ENCODE measurements at regions of chr18 and their contacts with region 1.

Region 1: GRCh38 chr18:58314284-58314683 is 270.3 kb downstream of the NEDD4L start:
- DNase-seq: peak; percentile 95
- H3K4me3 Mint-ChIP-seq: no peak overlapping the region
- H3K27ac Mint-ChIP-seq: peak overlapping the region; percentile 83
- H3K4me1 Mint-ChIP-seq: peaks cover 49% of the 10 kb centered on the region
- H3K27me3 Mint-ChIP-seq: no peaks in the 10 kb centered on the region
- CTCF ChIP-seq: no peak

Region 2: GRCh38 chr18:58186258-58186948 is 127.9 kb before region 1 on chr18:
- CTCF ChIA-PET with region 1: interaction called, 6 read pairs
- POLR2A ChIA-PET with region 1: interaction called, 13 read pairs
- intact Hi-C with region 1: no loop called
- DNase-seq: peak; percentile 80
- H3K4me3 Mint-ChIP-seq: peak overlapping the region; percentile 39
- H3K27ac Mint-ChIP-seq: peak overlapping the region; percentile 79
- H3K4me1 Mint-ChIP-seq: peaks cover 25% of the 10 kb centered on the region
- H3K27me3 Mint-ChIP-seq: no peaks in the 10 kb centered on the region
- CTCF ChIP-seq: no peak

Region 3: GRCh38 chr18:58195278-58195765 is 119.0 kb before region 1 on chr18:
- CTCF ChIA-PET with region 1: no interaction called
- POLR2A ChIA-PET with region 1: interaction called, 11 read pairs
- intact Hi-C with region 1: no loop called
- DNase-seq: peak; percentile 38
- H3K4me3 Mint-ChIP-seq: peak overlapping the region; percentile 75
- H3K27ac Mint-ChIP-seq: peak overlapping the region; percentile 32
- H3K4me1 Mint-ChIP-seq: peaks cover 23% of the 10 kb centered on the region
- H3K27me3 Mint-ChIP-seq: no peaks in the 10 kb centered on the region
- CTCF ChIP-seq: no peak

Region 4: DNA sequence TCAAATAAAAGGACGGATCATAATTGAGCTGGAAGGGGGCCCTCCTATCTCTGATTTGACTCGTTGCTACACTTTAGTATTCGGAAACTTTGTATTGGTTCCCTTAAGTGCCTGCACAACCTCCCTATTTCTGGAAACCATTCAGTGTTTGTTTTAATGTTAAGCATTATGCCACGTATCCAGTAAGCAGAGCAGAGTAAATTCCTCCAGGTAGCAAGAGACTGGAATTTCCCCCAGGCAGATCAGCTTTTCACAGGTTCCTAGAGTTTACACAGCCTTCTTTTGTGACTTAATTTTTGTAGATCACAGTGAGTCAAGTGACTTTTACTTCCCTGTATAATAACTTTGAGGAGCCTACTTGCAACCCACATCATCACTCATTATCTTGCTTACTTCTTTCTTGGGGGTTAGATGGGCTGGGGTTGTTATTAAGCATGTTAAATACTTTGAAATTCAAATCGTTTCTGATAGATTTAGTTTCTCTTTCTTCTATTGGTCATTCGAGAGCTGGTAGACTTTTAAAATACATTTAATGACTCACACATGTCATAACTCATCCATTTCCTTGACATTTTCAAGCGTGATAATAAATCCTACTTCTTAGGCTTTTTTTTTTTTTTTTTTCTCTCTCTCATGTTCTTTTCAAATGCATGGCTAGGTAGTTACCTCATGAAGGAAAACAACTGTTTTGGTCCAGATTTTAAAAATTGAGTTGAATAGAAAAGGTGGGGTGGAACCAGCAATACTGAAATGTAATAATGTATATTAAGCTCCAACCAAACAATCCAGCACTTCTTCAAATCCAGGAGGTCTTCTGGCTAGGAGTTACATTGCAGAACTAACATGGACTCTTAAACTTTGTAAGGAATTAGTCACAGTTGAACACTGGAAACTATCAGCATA is 51.0 kb before region 1 on chr18:
- CTCF ChIA-PET with region 1: interaction called, 3 read pairs
- POLR2A ChIA-PET with region 1: interaction called, 29 read pairs
- intact Hi-C with region 1: loop called (anchors 2 kb)
- DNase-seq: peak; percentile 56
- H3K4me3 Mint-ChIP-seq: peak overlapping the region; percentile 77
- H3K27ac Mint-ChIP-seq: peak overlapping the region; percentile 86
- H3K4me1 Mint-ChIP-seq: peaks cover 33% of the 10 kb centered on the region
- H3K27me3 Mint-ChIP-seq: no peaks in the 10 kb centered on the region
- CTCF ChIP-seq: no peak

Region 5: DNA sequence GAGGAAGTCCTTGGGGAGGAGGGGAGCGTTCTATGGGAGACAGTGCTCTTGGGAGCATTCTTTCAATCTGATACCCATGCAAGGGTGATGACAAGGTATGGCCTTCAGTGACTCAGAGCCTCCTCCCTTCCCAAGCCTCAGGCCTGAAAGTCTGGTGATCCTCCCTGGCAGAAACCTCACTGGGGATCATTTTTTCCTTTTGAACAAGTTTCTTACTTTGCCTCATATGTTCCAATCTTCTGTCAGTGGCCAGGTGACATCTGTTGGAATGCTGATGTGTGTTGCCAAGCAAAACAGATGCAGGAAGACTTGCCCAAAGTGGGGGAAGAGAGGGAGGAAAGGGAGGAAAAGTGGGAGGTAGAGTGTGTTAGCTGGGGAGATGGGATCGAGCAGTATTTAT is 45.4 kb before region 1 on chr18:
- CTCF ChIA-PET with region 1: interaction called, 6 read pairs
- POLR2A ChIA-PET with region 1: interaction called, 29 read pairs
- intact Hi-C with region 1: loop called (anchors 2 kb)
- DNase-seq: peak; percentile 81
- H3K4me3 Mint-ChIP-seq: peak overlapping the region; percentile 26
- H3K27ac Mint-ChIP-seq: peak overlapping the region; percentile 69
- H3K4me1 Mint-ChIP-seq: peaks cover 45% of the 10 kb centered on the region
- H3K27me3 Mint-ChIP-seq: no peaks in the 10 kb centered on the region
- CTCF ChIP-seq: no peak

Region 6: DNA sequence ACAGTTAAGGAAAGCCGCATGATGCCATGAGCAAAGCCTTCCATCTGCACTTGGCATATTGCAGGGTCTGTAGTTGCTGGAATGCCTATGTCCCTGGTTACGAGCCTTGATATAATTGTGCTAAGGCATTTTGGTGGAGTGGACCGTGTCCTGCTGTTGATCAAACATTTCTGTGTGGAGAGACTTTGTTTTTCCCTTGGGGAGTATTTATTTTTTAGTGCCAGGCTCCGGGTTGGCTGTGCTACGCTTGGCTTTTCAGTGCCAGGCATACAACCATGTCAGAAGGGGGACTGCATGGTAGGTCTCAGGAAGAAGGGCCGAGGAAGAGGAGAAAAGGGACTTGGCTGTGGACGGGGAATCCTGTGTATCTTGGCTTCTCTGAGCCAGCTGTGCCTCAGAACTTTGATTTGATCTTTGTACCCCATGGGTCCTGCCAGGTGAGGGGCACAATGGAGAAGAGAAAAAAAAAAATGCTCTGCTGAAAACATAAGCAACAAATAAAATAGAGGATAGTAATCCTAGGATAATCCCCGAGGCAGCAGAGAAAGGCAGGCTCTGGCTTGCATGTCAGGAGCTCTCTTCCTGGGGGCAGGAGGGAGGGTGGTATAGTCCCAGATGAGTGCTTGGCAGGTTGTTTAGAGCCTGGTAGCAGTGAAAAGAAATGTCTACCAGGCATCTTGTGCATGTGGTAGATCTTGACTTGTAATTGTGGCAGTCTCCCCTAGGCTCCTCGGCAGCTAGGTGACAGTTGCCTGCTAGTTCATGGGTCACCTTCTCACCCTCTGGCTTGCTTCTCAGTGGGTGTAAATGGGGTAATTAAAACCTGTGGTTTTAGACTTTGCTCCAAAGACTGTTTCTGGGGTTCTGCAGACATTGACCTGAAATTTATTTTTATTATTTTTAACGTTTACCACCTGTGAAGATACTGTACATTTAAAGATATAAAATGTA is 37.2 kb before region 1 on chr18:
- CTCF ChIA-PET with region 1: interaction called, 6 read pairs
- POLR2A ChIA-PET with region 1: interaction called, 378 read pairs
- intact Hi-C with region 1: no loop called
- DNase-seq: peak; percentile 44
- H3K4me3 Mint-ChIP-seq: no peak overlapping the region
- H3K27ac Mint-ChIP-seq: peak overlapping the region; percentile 53
- H3K4me1 Mint-ChIP-seq: peaks cover 28% of the 10 kb centered on the region
- H3K27me3 Mint-ChIP-seq: no peaks in the 10 kb centered on the region
- CTCF ChIP-seq: no peak

Region 7: DNA sequence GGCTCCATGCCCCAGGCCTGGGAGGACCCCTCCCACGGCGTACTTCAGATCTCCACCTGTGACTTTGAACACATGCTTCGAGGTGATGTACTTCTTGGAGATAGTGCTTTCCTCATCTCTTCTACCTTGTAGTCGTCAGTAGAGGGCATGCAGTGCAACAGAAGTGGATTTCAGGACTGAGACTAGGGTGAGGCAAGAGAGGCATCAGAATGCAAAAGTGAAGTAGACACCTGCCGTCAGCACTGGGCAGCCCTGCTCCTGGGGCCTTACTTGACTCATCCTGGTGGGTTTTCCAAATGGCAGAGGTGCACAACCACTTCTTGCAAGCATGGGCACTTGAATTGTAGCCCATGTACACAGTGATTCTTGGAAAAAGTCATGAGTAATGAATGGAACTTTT is 11.5 kb before region 1 on chr18:
- CTCF ChIA-PET with region 1: interaction called, 10 read pairs
- POLR2A ChIA-PET with region 1: interaction called, 29 read pairs
- intact Hi-C with region 1: no loop called
- DNase-seq: no peak
- H3K4me3 Mint-ChIP-seq: no peak overlapping the region
- H3K27ac Mint-ChIP-seq: no peak overlapping the region
- H3K4me1 Mint-ChIP-seq: peaks cover 15% of the 10 kb centered on the region
- H3K27me3 Mint-ChIP-seq: no peaks in the 10 kb centered on the region
- CTCF ChIP-seq: no peak

Measured in MCF 10A (cell line).